Left ventricle myocardium inferior (tissue), 1 donor: ENCODE measurements at regions of chr16 and their contacts with region 1.

Region 1: DNA sequence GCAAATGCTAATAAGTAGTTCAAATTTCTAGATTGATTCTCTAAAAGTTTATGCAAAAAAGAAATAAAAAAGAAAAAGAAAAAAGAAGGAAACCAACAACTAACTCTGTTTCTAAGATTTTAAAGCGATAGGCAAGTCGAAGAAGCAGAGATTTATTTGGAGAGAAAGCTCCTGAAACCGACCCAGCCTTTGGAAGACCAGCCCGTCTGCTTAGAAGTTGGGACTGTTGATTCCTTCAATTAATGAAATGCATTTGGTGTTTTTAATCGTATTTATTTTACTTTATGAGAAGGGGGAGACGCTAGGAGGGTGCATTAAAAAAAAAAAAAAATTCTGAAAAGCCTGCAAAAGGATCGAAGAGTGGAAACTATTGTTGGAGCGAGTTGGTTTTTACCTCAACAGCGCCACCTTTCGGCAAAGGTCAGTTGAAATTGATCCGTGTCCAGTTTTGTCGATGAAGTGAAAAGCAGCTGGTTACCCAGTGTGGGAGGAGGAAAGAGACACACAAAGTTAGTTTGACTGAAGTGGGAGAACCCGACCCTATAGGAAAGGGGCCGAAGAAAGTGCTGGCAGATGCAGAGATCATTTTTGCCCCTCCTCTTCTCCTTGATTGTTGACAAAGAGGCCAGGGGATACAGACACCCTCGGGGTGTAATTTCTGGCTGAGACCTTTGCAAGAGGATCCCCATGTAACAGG is 1.5 kb upstream of the MAF start:
- DNase-seq: peak; percentile 76
- H3K4me3 ChIP-seq: peak overlapping the region; percentile 79
- H3K27ac ChIP-seq: peak overlapping the region; percentile 95
- H3K4me1 ChIP-seq: peaks cover 39% of the 10 kb centered on the region
- H3K27me3 ChIP-seq: no peaks in the 10 kb centered on the region
- CTCF ChIP-seq: peak; percentile 83

Region 2: GRCh38 chr16:78503602-78504001 is 1098.5 kb before region 1 on chr16:
- intact Hi-C with region 1: loop called (anchors 5 kb)
- DNase-seq: no peak
- H3K4me3 ChIP-seq: no peak overlapping the region
- H3K27ac ChIP-seq: no peak overlapping the region
- H3K4me1 ChIP-seq: peaks cover 26% of the 10 kb centered on the region
- H3K27me3 ChIP-seq: no peaks in the 10 kb centered on the region
- CTCF ChIP-seq: peak; percentile 89

Region 3: GRCh38 chr16:78925083-78925767 is 676.9 kb before region 1 on chr16:
- intact Hi-C with region 1: loop called (anchors 10 kb)
- DNase-seq: peak; percentile 19
- H3K4me3 ChIP-seq: no peak overlapping the region
- H3K27ac ChIP-seq: no peak overlapping the region
- H3K4me1 ChIP-seq: no peaks in the 10 kb centered on the region
- H3K27me3 ChIP-seq: no peaks in the 10 kb centered on the region
- CTCF ChIP-seq: peak; percentile 69

Region 4: DNA sequence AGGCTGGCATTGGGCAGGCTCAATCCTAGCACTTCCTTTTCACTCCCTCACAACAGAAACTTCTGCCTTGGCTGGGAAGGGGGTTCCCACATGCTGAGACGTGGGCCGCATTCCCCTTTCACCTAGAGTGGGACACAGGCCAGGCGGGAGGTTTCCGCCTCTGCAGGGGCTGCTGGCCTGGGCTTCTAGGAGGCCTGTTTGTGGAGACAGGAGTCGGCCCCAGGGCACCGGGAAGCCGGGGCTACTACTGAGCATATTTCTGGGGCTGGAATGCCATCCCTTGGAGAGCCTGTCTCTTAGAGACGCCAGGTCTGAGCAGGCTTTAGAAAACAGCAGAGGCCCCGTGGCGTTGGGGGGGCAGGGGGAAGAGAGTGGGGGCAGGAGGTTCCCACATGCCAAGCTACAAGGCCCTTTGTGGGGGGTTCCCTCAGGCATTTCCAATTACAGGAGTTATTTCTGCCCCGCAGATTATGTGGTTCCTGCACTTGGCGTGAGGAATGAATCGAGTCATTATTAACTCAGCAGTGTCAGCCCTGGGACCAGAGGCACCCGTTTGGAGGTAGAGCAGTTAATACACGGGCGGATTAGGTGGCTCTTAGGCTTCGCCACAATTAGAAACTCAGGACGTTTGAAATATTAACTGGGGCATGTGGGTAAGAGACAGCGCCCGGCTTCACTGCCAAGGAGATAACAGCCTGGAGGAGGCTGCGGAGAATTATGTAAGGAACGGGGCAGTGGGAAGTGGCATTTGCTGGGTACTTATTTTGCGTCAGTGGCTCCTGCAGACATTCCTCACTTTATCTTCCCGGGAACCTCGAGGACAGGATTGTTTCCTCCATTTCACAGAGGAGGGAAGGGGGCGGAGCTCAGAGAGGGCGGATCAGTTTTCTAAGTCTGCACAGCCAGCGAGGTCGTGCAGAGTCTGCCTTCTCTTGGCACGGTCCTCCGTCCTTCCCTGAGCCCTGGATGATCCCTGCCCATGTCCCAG is 164.0 kb before region 1 on chr16:
- intact Hi-C with region 1: loop called (anchors 5 kb)
- DNase-seq: peak; percentile 48
- H3K4me3 ChIP-seq: peak overlapping the region; percentile 45
- H3K27ac ChIP-seq: peak overlapping the region; percentile 64
- H3K4me1 ChIP-seq: peaks cover 38% of the 10 kb centered on the region
- H3K27me3 ChIP-seq: no peaks in the 10 kb centered on the region
- CTCF ChIP-seq: no peak

Region 5: DNA sequence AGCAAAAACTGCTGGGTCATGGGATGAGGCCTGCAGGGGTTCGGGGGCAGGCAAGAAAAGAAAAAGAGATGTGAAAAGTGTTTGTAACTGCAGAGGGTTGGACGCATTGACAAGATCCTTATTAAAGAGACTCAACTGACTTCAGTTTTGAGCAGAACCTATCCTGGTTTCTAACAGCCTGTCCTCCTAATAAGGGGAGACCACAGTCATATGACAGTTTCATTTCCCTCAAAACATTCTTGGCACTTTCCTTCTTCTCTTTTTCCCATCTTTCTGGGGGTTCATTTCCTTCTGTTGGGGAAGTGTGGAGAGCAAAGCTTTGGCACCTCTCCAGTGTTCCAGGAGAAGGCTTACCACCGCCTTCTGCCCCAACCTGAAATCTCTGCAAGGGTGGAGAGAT is 120.1 kb before region 1 on chr16:
- intact Hi-C with region 1: no loop called
- DNase-seq: no peak
- H3K4me3 ChIP-seq: no peak overlapping the region
- H3K27ac ChIP-seq: peak overlapping the region; percentile 19
- H3K4me1 ChIP-seq: no peaks in the 10 kb centered on the region
- H3K27me3 ChIP-seq: peaks cover 17% of the 10 kb centered on the region
- CTCF ChIP-seq: no peak